Activated CD4-positive, alpha-beta T cell treated with anti-CD3 and anti-CD28 coated beads for 36 hours (primary cell): ENCODE measurements at regions of chr3 and their contacts with region 1.

Region 1: GRCh38 chr3:179604321-179605078 is at the starts of genes MRPL47 and NDUFB5:
- DNase-seq: peak; percentile 95
- ATAC-seq: peak; percentile 92
- H3K4me3 Mint-ChIP-seq: peak within 1 kb of the TSS; percentile 92
- H3K27ac Mint-ChIP-seq: peak within 1 kb of the TSS; percentile 100
- H3K4me1 Mint-ChIP-seq: peaks cover 37% of the 10 kb centered on the region
- H3K27me3 Mint-ChIP-seq: no peaks in the 10 kb centered on the region
- total RNA-seq, gene MRPL47: 49.8 to 56.4 TPM
- total RNA-seq, gene NDUFB5: 105 to 110 TPM

Region 2: GRCh38 chr3:179015551-179016020 is 588.9 kb before region 1 on chr3:
- CTCF ChIA-PET with region 1: no interaction called
- POLR2A ChIA-PET with region 1: no interaction called
- intact Hi-C with region 1: loop called in 1 of 2 experiments (anchors 5 kb)
- DNase-seq: peak; percentile 65
- ATAC-seq: peak; percentile 83
- H3K4me3 Mint-ChIP-seq: no peak overlapping the region
- H3K27ac Mint-ChIP-seq: no peak overlapping the region
- H3K4me1 Mint-ChIP-seq: peaks cover 35% of the 10 kb centered on the region
- H3K27me3 Mint-ChIP-seq: peaks cover 4% of the 10 kb centered on the region

Region 3: DNA sequence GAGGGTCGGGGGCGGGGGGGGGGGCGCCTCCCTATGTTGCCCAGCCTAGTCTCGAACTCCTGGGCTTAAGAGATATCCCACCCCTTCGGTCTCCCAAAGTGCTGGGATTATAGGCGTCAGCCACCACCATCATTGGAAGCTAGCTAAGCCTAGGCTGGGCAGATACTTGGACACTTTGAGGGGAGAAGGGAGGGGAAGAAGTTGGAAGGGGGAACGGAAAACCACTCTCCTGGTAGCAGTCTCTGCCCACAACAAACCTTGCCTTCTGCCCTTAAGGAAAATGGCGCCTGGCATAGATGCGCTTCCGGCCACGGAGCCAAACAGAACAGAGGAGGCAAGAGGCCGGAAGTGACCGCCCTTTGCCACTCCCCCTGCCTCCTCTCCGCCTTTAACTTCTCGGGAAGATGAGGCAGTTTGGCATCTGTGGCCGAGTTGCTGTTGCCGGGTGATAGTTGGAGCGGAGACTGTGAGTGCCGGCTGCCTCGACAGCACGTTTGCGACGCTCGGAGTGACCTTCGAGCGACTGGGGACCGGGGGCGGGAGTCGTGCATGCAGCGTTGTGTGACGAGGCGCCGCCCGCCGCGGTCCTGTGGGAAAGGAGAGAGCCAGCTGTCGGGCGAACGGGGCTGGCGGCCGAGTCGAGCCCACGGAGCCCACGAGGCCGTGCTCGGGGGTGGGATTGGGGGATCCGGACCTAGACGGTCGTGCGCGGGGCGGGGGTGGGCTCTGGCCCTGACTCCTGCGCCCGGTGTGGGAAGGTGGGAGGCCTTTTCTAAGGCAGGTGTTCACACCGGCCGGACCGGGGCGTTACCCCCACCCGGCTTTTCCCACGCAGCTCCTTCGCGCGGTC is 256.9 kb before region 1 on chr3 and contains the start of gene MFN1:
- CTCF ChIA-PET with region 1: interaction called, 3 read pairs
- POLR2A ChIA-PET with region 1: no interaction called
- intact Hi-C with region 1: loop called (anchors 1 kb)
- DNase-seq: peak; percentile 94
- ATAC-seq: peak; percentile 98
- H3K4me3 Mint-ChIP-seq: peak within 1 kb of the TSS; percentile 99
- H3K27ac Mint-ChIP-seq: peak within 1 kb of the TSS; percentile 93
- H3K4me1 Mint-ChIP-seq: peaks cover 22% of the 10 kb centered on the region
- H3K27me3 Mint-ChIP-seq: no peaks in the 10 kb centered on the region
- total RNA-seq, gene MFN1: 24.4 to 30.4 TPM

Region 4: DNA sequence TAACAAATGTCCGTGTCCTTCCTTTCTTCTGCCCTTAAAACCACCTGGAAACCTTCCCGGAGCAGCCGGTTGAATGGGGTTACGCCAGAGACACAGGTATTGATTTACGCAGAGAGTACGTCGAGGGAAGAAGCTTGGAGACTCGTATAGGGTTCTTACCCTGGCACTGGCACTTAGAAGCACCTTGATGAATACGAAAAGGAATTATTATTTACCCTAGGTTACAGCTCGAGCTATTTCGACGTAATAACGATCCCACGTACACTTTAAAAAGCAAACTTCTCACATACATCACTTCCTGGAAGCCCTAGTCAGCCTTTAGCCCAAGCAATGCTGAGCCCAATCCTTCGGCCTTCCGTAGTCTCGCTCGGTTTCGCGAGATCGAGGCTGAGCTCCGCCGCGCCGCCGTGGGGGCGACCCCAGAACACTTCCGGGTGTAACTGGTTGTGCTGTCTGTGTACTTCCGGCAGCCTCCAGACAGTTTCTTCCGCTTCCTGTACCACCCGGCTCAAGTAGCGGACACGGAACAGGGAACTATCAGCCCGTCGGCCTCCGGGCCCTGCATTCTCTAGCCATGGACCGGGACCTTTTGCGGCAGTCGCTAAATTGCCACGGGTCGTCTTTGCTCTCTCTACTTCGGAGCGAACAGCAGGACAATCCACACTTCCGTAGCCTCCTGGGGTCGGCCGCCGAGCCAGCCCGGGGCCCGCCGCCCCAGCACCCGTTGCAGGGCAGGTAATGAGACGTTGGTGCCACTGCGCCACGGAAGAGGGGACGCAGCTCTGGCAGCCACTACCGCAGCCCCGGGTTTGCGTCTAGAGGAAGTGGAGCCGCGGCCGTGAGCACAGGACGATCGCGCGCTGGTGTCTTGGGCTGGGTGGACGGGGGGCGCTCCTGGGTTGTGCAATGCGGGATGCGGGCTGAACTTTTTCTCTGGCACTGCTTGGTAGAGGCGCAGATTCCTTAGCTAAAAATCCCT is 997.5 kb after region 1 on chr3 and contains the start of gene TTC14:
- CTCF ChIA-PET with region 1: no interaction called
- POLR2A ChIA-PET with region 1: no interaction called
- intact Hi-C with region 1: loop called in 1 of 2 experiments (anchors 1 kb)
- DNase-seq: peak; percentile 96
- ATAC-seq: peak; percentile 96
- H3K4me3 Mint-ChIP-seq: peak within 1 kb of the TSS; percentile 98
- H3K27ac Mint-ChIP-seq: peak within 1 kb of the TSS; percentile 98
- H3K4me1 Mint-ChIP-seq: peaks cover 17% of the 10 kb centered on the region
- H3K27me3 Mint-ChIP-seq: peaks cover 4% of the 10 kb centered on the region
- total RNA-seq, gene TTC14: 38.0 to 41.2 TPM

Region 5: DNA sequence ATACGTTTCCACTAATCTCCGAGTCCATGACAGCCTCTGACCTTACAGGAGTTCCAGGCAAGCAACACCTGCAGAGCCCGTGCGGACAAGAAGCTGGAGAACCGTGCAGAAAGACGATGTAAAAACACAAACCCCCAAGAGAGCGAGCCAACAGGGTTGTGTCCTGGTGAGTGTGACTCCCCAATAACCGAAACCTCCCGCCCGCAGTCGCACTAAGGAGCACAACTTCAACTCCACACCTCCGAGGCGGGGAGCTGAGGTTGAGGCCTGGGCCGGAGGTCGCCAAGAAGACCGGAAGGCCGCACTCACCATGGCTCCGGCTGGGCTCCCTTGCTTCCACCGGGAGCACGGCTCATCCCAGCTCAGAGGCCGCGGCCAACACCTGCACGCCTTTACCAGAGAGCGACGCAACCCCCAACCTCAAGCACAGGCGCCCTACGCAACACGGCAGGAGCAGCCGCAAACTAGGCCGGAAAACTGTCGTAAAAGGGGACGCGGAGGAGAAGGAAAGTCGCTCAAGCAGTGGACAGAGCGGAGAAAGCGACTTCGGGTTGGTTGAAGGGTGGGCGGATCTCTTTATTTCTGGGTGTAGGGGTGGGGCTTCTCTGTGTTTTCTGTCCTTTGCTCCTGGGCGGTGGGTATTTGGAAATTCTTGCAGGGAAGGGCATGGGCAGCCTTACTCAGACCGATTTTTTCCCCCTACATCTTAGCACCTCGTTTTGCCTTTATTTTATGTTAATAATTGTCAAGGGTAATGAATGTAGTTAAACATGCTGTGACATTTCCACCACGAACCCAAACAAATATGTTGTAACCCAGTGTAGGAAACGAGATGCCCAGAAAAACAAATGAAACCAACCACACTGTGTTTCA is 1385.0 kb after region 1 on chr3 and contains the start of gene DNAJC19:
- CTCF ChIA-PET with region 1: no interaction called
- POLR2A ChIA-PET with region 1: no interaction called
- intact Hi-C with region 1: loop called in 1 of 2 experiments (anchors 1 kb)
- DNase-seq: peak; percentile 94
- ATAC-seq: peak; percentile 97
- H3K4me3 Mint-ChIP-seq: peak within 1 kb of the TSS; percentile 86
- H3K27ac Mint-ChIP-seq: peak within 1 kb of the TSS; percentile 94
- H3K4me1 Mint-ChIP-seq: peaks cover 25% of the 10 kb centered on the region
- H3K27me3 Mint-ChIP-seq: peaks cover 5% of the 10 kb centered on the region
- total RNA-seq, gene DNAJC19: 55.0 to 80.7 TPM